PC-3 (cell line): ENCODE measurements at regions of chr1 and their contacts with region 1.

Region 1: GRCh38 chr1:204506961-204507387 is 9.2 kb upstream of the MDM4 start:
- DNase-seq: peak; percentile 100
- ATAC-seq: peak; percentile 75
- H3K4me3 ChIP-seq: peak overlapping the region; percentile 76
- H3K27ac ChIP-seq: peak overlapping the region; percentile 59
- H3K4me1 ChIP-seq: peaks cover 23% of the 10 kb centered on the region
- H3K27me3 ChIP-seq: no peaks in the 10 kb centered on the region
- CTCF ChIP-seq: no peak

Region 2: DNA sequence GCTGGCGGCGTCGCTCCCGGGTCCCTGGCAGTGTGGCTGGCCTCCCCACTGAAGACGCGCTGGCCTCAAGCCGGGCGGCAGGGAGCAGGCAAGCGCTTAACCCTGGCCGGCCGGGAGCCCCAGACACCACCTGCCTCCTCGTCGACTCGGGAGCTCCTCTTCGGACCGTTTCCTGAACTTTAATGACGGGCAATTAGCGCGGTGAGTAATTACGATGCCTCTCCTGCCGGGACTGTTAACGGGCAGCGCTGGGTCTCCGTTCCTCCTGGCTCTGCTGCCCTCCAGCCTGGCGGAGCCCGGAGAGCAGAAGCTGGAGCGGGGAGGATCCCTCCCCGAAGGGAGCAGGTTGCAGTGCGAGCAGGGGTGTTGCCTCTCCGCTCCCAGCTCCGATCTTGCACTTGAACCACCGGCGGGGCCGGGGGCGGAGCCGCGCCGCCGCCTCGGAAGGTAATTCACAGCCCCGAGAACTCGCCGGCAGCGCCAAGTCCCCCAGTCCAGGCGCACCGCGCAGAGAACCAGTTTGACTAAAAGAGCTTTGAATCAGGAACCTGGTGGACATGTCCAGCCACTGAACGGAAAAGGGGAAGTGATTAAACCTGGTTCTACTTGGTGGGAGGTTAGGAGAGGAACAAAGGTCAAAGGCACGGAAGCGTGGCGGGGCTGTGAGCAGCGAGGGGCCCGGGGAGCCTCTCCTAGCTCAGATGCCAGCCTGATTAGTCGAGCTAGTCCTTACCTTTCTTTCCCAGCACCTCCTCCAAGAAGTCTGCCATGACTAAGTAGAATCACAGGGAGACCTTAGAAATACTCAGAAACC is 129.0 kb before region 1 on chr1:
- CTCF ChIA-PET with region 1: interaction called, 12 read pairs
- POLR2A ChIA-PET with region 1: interaction called, 3 read pairs
- intact Hi-C with region 1: no loop called
- DNase-seq: peak; percentile 90
- ATAC-seq: peak; percentile 63
- H3K4me3 ChIP-seq: peak overlapping the region; percentile 72
- H3K27ac ChIP-seq: peak overlapping the region; percentile 70
- H3K4me1 ChIP-seq: peaks cover 43% of the 10 kb centered on the region
- H3K27me3 ChIP-seq: no peaks in the 10 kb centered on the region
- CTCF ChIP-seq: 0 out of 2 replicates have a peak, but pooled peaks have one; percentile 7

Region 3: DNA sequence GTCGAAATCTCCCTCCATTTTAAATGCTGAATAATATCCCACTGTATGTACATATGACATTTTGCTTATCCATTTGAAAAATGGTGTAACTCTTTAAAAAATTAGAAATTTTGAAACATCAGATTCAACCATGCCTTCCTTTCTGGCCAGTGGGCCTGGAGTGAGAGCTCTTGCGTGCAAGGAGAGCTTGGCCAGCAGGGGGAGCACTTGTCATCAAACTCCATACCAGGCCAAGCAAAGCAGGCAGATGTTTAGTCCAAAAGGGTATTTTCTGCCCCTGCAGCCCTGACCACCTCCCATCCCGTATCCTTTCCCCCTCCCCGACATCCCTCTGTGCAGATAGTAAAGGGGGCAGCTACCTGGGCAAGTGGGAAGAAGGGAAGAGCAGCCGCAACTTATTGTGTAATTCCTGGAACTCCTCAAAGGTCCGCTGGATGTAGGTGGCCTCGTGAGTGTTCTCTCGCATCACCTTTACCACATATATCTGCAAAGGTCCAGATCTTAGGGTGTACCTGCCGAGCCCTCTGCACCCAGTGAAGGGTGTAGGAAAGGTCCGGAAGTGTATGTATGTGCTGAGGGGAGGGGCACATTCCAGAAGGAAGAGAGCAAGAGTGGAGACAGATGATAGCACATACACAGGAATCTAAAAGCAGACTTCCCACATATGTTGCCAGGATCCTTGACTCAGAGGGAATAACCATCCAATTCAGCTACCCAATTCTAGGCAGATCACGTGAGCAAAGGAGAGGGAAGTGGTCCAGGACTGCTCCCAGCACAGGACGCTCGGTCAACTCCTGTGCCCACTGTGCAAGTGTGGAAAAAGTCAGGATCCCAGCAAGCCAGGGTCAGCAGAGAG is 75.4 kb before region 1 on chr1:
- CTCF ChIA-PET with region 1: interaction called, 28 read pairs
- POLR2A ChIA-PET with region 1: no interaction called
- intact Hi-C with region 1: loop called (anchors 1 kb)
- DNase-seq: peak; percentile 93
- ATAC-seq: peak; percentile 96
- H3K4me3 ChIP-seq: no peak overlapping the region
- H3K27ac ChIP-seq: no peak overlapping the region
- H3K4me1 ChIP-seq: peaks cover 10% of the 10 kb centered on the region
- H3K27me3 ChIP-seq: no peaks in the 10 kb centered on the region
- CTCF ChIP-seq: peak; percentile 100

Region 4: DNA sequence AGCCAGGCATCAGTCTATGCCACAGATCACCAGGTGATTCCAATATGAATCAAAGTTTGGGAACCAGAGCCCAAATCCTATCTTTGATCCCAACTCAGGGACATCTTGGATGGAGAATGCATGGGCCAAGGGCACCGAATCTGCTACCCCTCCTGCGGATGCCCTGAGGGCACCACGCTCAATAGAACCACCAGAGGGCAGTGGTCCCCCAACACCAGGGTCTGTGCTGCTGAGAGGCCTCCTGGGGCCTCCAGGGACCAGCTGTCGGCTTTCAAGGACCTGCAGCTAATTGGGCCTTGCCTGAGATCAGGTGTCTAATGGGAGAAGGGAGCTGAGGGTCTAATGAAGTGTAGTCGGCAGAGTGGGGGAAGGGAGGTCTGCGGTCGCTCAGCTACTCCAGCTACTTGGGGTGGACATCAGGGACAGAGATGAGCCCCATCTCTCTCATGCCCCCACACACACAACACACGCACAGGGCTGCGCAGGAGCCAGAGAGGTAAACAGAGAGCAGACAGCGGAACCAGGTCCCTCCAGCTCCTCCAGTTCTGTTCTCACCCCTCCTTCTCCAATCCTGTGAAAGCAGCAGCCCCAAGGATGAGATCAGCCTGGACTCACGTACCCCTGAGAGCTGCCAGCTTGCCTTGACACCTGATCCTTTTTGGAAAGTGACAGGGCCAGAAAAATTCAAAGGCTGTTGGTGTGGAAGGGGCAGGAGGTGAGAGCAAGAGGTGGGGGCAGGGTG is 60.4 kb before region 1 on chr1:
- CTCF ChIA-PET with region 1: interaction called, 10 read pairs
- POLR2A ChIA-PET with region 1: interaction called, 11 read pairs
- intact Hi-C with region 1: loop called (anchors 1 kb)
- DNase-seq: peak; percentile 76
- ATAC-seq: peak; percentile 6; the same call in 1 of the 2 replicates
- H3K4me3 ChIP-seq: no peak overlapping the region
- H3K27ac ChIP-seq: no peak overlapping the region
- H3K4me1 ChIP-seq: peaks cover 64% of the 10 kb centered on the region
- H3K27me3 ChIP-seq: no peaks in the 10 kb centered on the region
- CTCF ChIP-seq: peak; percentile 68

Region 5: DNA sequence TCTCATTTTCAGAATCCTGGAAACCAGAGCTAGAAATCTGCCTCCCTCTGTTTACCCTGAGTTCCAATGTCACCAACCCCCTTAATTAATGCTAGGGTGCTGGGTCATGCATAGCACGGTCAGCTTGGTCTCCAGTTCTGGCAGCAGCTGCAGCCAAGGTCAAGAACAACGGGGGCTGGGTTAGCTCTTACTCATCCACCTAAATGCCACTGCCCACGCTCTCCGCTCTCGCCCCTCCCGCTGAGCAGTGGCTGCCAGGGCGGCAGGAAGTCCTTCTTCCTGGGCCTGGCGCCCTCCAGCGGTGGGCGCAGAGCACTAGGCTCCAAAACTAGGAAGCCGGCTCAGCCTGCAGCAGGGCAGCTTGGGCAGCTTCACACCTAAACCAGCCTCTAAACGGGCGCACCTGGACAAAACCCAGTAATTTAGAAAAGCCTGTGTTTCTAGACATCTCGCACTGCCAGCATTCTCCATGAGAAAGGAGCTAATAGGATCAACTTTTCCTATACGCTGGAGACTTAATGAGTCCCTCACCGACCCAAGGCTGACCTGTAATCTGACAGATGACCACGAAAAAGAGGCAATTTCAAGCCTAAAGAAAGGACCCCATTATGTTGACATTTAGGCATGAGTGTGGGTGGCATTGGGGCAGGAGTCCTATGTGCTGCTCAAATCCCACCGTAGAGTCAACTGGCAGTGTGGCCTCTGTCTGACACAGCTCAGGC is 256.9 kb after region 1 on chr1:
- CTCF ChIA-PET with region 1: interaction called, 12 read pairs
- POLR2A ChIA-PET with region 1: no interaction called
- intact Hi-C with region 1: no loop called
- DNase-seq: peak; percentile 98
- ATAC-seq: peak; percentile 93
- H3K4me3 ChIP-seq: no peak overlapping the region
- H3K27ac ChIP-seq: no peak overlapping the region
- H3K4me1 ChIP-seq: peaks cover 12% of the 10 kb centered on the region
- H3K27me3 ChIP-seq: peaks cover 15% of the 10 kb centered on the region
- CTCF ChIP-seq: peak; percentile 100